ENCODE measurements at regions of chr12 and their contacts with region 1.

Region 1: GRCh38 chr12:12786716-12787601 is 1.5 kb downstream of the APOLD1 start:
- DNase-seq: no peak
- H3K4me3 ChIP-seq: peak overlapping the region; percentile 65
- CTCF ChIP-seq: peak; percentile 5

Region 2: GRCh38 chr12:12736759-12737676 is 49.9 kb before region 1 on chr12:
- CTCF ChIA-PET with region 1: interaction called, 12 read pairs
- POLR2A ChIA-PET with region 1: no interaction called
- DNase-seq: no peak
- H3K4me3 ChIP-seq: peak overlapping the region; percentile 16; the same call in 1 of the 2 replicates
- CTCF ChIP-seq: peak; percentile 36

Region 3: DNA sequence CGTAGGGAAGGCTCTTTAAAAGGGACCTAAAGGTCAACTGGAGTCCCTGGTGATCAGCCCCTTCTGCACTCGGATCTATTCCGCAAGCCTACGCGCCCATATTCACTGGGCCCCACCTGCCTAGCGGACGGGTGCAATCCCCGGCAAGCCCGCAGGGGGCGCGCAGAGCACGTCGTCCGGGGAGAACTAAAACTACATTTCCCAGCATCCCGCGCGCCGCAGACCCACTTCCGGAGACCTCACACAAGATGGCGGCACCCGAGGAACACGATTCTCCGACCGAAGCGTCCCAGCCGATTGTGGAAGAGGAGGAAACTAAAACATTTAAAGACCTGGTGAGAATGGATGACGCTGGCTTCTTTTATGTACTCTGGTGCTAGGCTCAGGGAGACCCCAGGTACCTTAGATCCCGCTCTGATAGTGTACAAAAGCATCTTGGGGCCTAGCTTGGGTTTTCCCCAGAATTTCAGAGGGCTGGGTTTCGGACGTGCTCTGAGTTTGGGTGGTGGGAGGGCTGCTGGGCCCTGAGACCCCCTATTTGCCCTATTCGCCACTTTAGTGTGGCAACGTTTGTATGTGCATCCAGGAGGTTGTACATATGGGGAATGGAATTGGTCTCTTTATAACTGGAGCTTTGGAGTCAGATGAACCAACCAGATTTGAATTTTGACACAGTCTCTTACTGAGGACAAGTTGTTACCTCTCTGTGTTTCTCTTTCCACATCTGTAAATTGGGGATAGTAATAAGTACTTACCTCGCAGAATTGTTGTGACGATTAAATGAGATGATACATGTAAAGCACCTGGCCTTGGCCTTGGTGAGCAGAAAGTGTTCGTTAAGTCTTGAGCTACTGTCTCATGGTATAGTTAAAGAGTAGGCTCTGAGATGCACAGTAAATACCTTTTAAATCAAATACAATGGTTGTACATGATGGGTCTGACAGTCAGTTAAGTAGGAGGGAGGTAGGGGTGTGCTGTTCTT is 26.5 kb after region 1 on chr12 and contains the start of gene DDX47:
- CTCF ChIA-PET with region 1: interaction called, 44 read pairs
- POLR2A ChIA-PET with region 1: no interaction called
- DNase-seq: no peak
- H3K4me3 ChIP-seq: peak within 1 kb of the TSS; percentile 86
- CTCF ChIP-seq: peak; percentile 98

Region 4: GRCh38 chr12:12837025-12837872 is 50.3 kb after region 1 on chr12:
- CTCF ChIA-PET with region 1: interaction called, 18 read pairs
- POLR2A ChIA-PET with region 1: no interaction called
- DNase-seq: no peak
- H3K4me3 ChIP-seq: no peak overlapping the region
- CTCF ChIP-seq: peak; percentile 47

Region 5: GRCh38 chr12:12983420-12984035 is 196.6 kb after region 1 on chr12:
- CTCF ChIA-PET with region 1: interaction called, 100 read pairs
- POLR2A ChIA-PET with region 1: no interaction called
- DNase-seq: no peak
- H3K4me3 ChIP-seq: no peak overlapping the region
- CTCF ChIP-seq: peak; percentile 69